ENCODE measurements at regions of chr2 and their contacts with region 1.

Region 1: DNA sequence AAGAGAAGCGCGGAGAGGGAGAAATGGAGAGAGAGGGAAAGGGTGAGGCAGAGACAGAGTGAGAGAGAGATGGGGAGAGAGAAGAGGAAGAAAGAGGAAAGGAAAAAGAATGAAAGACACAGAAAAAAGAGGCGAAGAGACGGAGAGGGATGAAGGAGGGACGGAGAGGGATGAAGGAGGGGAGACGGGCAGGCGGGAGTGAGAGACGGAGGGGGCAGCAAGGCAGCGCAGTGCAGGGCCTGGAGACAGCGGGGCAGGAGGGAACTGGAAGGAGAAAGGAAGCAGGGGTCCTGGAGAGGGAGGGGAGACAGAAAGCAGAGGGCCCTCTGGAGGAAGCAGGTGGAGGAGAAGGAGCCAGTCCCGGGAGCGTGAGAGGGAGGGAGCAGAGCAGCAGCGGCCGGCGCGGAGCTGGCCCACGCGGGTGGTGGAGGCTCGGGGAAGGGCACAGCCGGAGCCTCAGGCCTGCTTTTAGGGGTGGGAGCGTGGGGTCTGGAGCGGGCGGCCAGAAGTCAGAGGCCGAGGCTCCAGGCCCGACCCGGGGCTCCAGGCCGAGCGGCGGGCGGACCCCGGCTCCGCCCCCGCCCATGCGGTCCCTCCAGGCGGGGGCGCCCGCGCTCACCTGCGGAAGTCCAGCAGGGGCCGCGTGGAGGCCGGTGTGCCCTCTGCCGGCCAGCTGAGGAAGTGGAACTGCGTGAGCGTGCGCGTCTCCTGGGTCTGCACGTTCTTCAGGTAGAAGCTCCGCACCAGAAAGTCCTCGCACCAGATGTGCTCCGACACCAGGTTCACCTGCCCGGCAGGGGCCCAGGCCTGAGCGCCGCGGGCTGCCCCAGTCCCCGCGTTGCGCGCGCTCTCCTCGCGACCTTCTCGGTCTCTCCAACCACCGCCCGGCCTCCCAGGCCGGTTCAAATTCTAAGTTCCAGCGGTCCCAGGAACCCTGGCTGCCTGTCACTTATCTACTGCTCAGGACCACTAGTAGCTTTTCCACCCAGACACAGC is 14.5 kb downstream of the PTPRN start:
- DNase-seq: peak; percentile 70
- ATAC-seq: peak; percentile 93
- H3K4me3 ChIP-seq: peak overlapping the region; percentile 40
- H3K27ac ChIP-seq: peak overlapping the region; percentile 40; the same call in 1 of the 2 replicates
- H3K4me1 ChIP-seq: peaks cover 12% of the 10 kb centered on the region
- H3K27me3 ChIP-seq: no peaks in the 10 kb centered on the region
- CTCF ChIP-seq: peak; percentile 99
- POLR2A ChIP-seq: no peak; the same call in 1 of the 2 replicates
- RAD21 ChIP-seq: peak; percentile 80

Region 2: DNA sequence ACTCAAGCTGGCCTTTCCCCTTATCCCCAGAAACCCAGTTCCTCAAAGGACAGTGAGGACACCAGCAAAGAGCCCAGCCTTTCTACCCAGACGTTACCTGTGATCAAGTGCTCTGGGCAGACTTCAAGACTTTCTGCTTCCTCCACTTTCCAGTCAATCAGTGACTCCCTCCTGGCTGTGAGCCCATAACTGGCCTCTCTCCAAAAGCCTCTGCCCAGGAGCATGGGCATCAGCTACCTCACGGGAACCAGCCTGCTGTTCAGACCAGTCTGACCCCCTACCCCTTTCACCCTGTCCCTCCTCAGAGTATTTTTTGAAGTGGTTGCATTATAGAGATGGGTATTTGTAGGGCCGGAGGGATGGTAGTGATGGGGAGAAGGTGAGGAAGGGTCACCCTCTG is 540.5 kb before region 1 on chr2:
- CTCF ChIA-PET with region 1: no interaction called
- POLR2A ChIA-PET with region 1: no interaction called
- dilution Hi-C with region 1: no loop called
- in situ Hi-C with region 1: no loop called
- intact Hi-C with region 1: no loop called
- DNase-seq: no peak
- ATAC-seq: no peak
- H3K4me3 ChIP-seq: no peak overlapping the region
- H3K27ac ChIP-seq: no peak overlapping the region
- H3K4me1 ChIP-seq: no peaks in the 10 kb centered on the region
- H3K27me3 ChIP-seq: no peaks in the 10 kb centered on the region
- CTCF ChIP-seq: no peak
- POLR2A ChIP-seq: no peak
- RAD21 ChIP-seq: no peak

Region 3: DNA sequence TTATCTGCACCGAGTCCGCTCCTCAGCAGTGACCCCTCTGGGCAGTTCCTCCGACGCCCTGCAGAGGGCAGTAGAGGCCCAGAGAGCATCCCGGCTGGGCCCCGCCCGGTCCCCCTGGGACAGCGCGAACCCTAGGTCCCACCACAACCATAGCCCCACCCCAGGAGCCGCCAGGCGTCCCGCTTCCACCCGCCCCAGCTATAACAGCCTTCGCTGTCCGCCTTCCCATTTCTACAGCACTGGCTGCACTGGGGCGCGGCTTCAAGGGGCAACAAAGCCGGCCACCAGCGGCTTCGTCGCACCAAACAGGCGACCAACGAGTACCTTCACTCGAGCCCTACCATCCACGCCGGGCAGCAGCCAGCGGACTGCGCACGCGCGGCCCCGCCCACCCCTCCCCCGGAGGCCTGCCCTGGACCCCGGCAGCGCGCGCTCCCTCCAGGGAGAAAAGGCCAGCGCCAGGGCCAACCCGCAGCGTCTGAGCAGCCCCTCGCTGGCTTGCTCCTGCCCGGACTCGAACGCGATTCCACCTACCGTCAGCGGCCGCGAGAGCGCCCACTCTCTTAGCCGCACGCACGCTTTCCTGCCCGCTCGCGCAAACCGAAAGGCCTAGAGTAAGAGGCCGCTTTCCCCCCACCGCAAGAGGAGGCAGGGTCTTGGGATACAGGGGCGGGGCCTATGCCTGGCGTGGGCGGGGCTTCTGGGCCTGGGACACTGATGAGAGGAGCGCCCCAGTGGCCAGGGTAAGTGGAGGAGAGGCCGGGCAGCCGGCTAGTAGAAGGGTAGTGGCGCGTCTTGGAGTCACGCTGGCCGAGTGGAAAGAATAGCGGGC is 134.3 kb before region 1 on chr2 and contains the start of gene NHEJ1:
- CTCF ChIA-PET with region 1: interaction called, 8 read pairs
- POLR2A ChIA-PET with region 1: no interaction called
- dilution Hi-C with region 1: no loop called
- in situ Hi-C with region 1: no loop called
- intact Hi-C with region 1: loop called (anchors 1 kb)
- DNase-seq: peak; percentile 89
- ATAC-seq: peak; percentile 94
- H3K4me3 ChIP-seq: peak within 1 kb of the TSS; percentile 82
- H3K27ac ChIP-seq: peak within 1 kb of the TSS; percentile 99
- H3K4me1 ChIP-seq: peaks cover 2% of the 10 kb centered on the region; the same call in 1 of the 2 replicates
- H3K27me3 ChIP-seq: no peaks in the 10 kb centered on the region
- CTCF ChIP-seq: peak; percentile 95
- POLR2A ChIP-seq: peak; percentile 44
- RAD21 ChIP-seq: peak; percentile 84
- total RNA-seq, gene NHEJ1: 15.3 and 23.1 TPM in 2 replicates

Region 4: GRCh38 chr2:219218732-219219701 is 75.6 kb before region 1 on chr2 and contains the start of gene ABCB6:
- CTCF ChIA-PET with region 1: interaction called, 3 read pairs
- POLR2A ChIA-PET with region 1: no interaction called
- dilution Hi-C with region 1: no loop called
- in situ Hi-C with region 1: no loop called
- intact Hi-C with region 1: loop called (anchors 1 kb)
- DNase-seq: peak; percentile 90
- ATAC-seq: peak; percentile 89
- H3K4me3 ChIP-seq: peak within 1 kb of the TSS; percentile 54
- H3K27ac ChIP-seq: peak within 1 kb of the TSS; percentile 92
- H3K4me1 ChIP-seq: peaks cover 5% of the 10 kb centered on the region; the same call in 1 of the 2 replicates
- H3K27me3 ChIP-seq: no peaks in the 10 kb centered on the region
- CTCF ChIP-seq: no peak
- POLR2A ChIP-seq: no peak; the same call in 1 of the 2 replicates
- RAD21 ChIP-seq: no peak
- total RNA-seq, gene ABCB6: 10.8 and 12.5 TPM in 2 replicates

Region 5: DNA sequence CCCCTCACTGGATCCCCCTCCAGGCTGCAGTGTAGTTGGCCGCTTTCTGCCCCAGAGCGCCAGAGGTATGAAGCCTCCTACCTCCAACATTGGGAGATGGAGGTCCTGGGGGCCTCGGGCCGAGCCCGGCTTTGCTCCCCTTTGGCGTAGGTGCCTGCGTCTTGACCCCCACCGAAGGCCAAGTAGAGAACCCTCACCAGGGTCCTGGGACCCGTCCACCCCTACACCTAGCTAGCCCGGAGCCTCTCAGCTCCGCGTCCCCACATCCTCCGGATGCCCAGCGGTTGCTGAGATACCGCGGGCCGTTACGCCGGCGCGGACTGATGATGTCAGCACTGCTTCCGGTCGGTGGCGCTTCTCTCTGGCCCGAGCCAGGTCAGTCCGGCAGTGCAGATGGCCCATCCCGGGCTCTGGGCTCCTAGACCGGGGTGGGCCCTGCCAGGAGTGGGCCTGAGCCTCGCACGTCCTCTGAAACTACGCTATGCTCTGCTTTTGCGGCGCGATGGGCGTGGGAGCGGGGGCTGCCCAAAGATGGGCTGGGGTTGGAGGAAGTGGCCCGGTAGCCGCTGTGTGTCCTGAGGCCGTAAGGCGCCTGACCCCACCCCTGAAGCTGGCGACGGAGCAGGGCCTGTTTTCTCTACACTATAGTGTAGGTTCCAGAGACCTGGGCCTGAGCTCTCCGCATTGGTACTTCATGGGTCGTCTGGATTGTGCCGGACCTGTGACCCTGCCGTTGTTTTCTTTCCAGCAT is 49.3 kb before region 1 on chr2 and contains the starts of genes GLB1L and STK16:
- CTCF ChIA-PET with region 1: interaction called, 14 read pairs
- POLR2A ChIA-PET with region 1: no interaction called
- dilution Hi-C with region 1: no loop called
- in situ Hi-C with region 1: no loop called
- intact Hi-C with region 1: no loop called
- DNase-seq: peak; percentile 92
- ATAC-seq: peak; percentile 83
- H3K4me3 ChIP-seq: peak within 1 kb of the TSS; percentile 89
- H3K27ac ChIP-seq: peak within 1 kb of the TSS; percentile 94
- H3K4me1 ChIP-seq: peaks cover 23% of the 10 kb centered on the region
- H3K27me3 ChIP-seq: no peaks in the 10 kb centered on the region
- CTCF ChIP-seq: peak; percentile 9; the same call in 1 of the 2 replicates
- POLR2A ChIP-seq: peak; percentile 95
- RAD21 ChIP-seq: no peak; the same call in 1 of the 2 replicates
- total RNA-seq, gene GLB1L: 3.6 and 4.1 TPM in 2 replicates
- total RNA-seq, gene STK16: 35.0 and 44.4 TPM in 2 replicates

Region 6: GRCh38 chr2:219308142-219309093 is 13.8 kb after region 1 on chr2:
- CTCF ChIA-PET with region 1: interaction called, 10 read pairs
- POLR2A ChIA-PET with region 1: no interaction called
- dilution Hi-C with region 1: no loop called
- in situ Hi-C with region 1: no loop called
- intact Hi-C with region 1: no loop called
- DNase-seq: peak; percentile 65
- ATAC-seq: peak; percentile 98
- H3K4me3 ChIP-seq: peak overlapping the region; percentile 59
- H3K27ac ChIP-seq: peak overlapping the region; percentile 32; the same call in 1 of the 2 replicates
- H3K4me1 ChIP-seq: peaks cover 6% of the 10 kb centered on the region; the same call in 1 of the 2 replicates
- H3K27me3 ChIP-seq: no peaks in the 10 kb centered on the region; the same call in 1 of the 2 replicates
- CTCF ChIP-seq: no peak
- POLR2A ChIP-seq: 0 out of 2 replicates have a peak, but pooled peaks have one; percentile 13
- RAD21 ChIP-seq: no peak